Gastrocnemius medialis (tissue), 4 donors: ENCODE measurements at regions of chr4 and their contacts with region 1.

Region 1: GRCh38 chr4:35461931-35462654 is 782.2 kb downstream of the ARAP2 start:
- DNase-seq: no peak
- ATAC-seq: no peak
- H3K4me3 ChIP-seq: no peak overlapping the region
- H3K27ac ChIP-seq: no peak overlapping the region
- H3K4me1 ChIP-seq: no peaks in the 10 kb centered on the region
- H3K27me3 ChIP-seq: no peaks in the 10 kb centered on the region
- CTCF ChIP-seq: no peak
- POLR2A ChIP-seq: no peak

Region 2: DNA sequence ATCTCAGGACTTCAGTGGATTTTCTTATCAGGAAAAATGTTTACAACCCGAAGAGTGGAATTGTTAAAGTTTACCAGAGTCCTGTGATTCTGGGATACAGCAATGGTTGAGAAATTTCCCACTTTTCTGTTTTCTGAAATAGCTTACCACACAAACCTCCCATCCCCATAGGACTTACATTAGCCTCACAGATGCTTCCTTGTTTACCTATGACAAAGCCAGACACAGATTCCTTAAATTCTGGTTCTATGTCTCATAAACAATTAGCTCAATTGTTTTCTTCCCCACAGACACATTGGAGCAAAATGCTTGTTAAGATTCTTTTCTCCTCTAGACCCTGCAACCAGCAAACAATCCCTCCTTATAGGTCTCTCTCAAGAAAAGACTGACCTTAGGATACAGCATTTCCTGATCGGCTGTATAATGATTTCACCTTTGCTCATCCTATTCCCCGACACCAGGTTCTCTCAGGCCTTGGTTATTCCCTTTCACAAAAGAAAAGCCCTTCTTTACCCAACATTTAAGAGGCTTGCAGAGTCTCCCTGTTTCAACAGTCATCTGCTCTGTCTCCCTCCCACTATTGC is 104.0 kb before region 1 on chr4:
- in situ Hi-C with region 1: loop called in 1 of 4 experiments (anchors 25 kb)
- intact Hi-C with region 1: no loop called
- DNase-seq: no peak
- ATAC-seq: no peak
- H3K4me3 ChIP-seq: no peak overlapping the region
- H3K27ac ChIP-seq: no peak overlapping the region
- H3K4me1 ChIP-seq: no peaks in the 10 kb centered on the region
- H3K27me3 ChIP-seq: no peaks in the 10 kb centered on the region
- CTCF ChIP-seq: no peak
- POLR2A ChIP-seq: no peak